Head of caudate nucleus (tissue), 42 donors: ENCODE measurements at regions of chr5 and their contacts with region 1.

Region 1: DNA sequence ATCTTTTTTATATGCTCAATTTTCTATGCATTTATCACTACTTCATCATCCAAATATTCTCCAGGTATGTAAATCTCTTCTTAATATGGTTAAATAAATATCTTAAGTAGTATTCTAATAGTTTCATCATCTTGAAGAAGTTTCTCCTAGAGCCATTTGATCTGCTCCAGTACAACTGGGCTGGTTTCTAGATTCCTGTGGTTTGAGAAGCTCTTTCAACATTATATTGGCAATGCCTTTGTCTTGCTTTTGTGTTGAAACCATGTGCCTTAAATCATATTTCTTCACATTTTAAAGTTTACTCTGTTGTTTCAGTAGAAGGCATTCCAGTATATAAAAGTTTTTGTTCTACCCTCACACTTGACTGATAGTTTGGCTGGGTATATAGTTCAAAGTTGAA is 27.6 kb downstream of the MBLAC2 start:
- DNase-seq: no peak

Region 2: GRCh38 chr5:90606539-90606938 is 159.6 kb after region 1 on chr5:
- intact Hi-C with region 1: loop called (anchors 10 kb)
- DNase-seq: no peak